Activated T-helper 2 cell treated with anti-CD3 and anti-CD28 coated beads, Interferon-gamma antibody, Interleukin-2, Interleukin-4, amounts not matched to agents 10 μg/mL and 5 μg/mL and 100 μg/mL, durations not matched to agents 14 hours and 24 hours and 36 hours (primary cell): ENCODE measurements at regions of chr13 and their contacts with region 1.

Region 1: GRCh38 chr13:77729502-77730221 is 32.2 kb downstream of the SLAIN1 start:
- DNase-seq: peak; percentile 51
- H3K4me3 Mint-ChIP-seq: peak overlapping the region; percentile 57
- H3K27ac Mint-ChIP-seq: peak overlapping the region; percentile 83
- H3K4me1 Mint-ChIP-seq: peaks cover 40% of the 10 kb centered on the region
- H3K27me3 Mint-ChIP-seq: no peaks in the 10 kb centered on the region

Region 2: DNA sequence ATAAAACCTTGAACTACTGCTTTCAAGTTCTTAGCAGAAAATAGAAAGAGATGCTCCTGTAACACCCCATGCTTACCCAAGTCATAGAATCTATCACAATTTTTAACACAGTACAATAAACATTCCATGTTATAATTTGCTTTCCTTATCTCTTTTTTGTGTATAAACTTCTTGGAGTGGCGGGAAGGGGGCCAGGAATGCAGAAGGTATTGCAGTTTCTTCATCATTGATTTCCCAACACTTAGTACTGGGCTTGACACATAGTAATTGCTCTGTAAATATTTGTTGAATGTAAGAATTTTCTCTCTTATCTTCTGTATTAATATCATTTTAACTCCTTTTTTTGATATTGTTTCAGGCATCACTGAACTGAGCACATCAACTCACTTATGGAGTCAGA is 1379.3 kb before region 1 on chr13:
- intact Hi-C with region 1: no loop called
- DNase-seq: no peak
- H3K4me3 Mint-ChIP-seq: no peak overlapping the region
- H3K27ac Mint-ChIP-seq: no peak overlapping the region
- H3K4me1 Mint-ChIP-seq: no peaks in the 10 kb centered on the region
- H3K27me3 Mint-ChIP-seq: no peaks in the 10 kb centered on the region

Region 3: DNA sequence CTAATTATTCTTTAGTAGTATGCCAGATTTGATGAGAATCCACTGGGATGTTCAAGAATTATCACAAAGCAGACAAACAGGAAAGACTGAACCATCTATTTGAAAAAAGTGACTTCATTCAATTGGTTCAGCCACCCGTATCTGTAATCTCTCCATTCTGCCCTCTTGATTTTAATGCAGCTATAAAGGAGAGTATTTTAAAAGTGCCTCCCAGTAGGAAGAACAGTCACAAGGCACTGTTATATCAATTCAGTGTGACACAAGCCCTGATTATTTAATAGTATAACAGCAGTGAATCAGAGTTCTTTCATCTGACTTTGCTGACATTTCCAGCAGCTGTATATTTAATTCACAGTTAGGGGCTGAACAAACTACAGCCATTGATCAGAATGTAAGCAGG is 109.5 kb before region 1 on chr13:
- intact Hi-C with region 1: no loop called
- DNase-seq: no peak
- H3K4me3 Mint-ChIP-seq: no peak overlapping the region
- H3K27ac Mint-ChIP-seq: no peak overlapping the region
- H3K4me1 Mint-ChIP-seq: no peaks in the 10 kb centered on the region
- H3K27me3 Mint-ChIP-seq: peaks cover 14% of the 10 kb centered on the region

Region 4: GRCh38 chr13:77715233-77715891 is 14.3 kb before region 1 on chr13:
- intact Hi-C with region 1: loop called (anchors 2 kb)
- DNase-seq: no peak
- H3K4me3 Mint-ChIP-seq: no peak overlapping the region
- H3K27ac Mint-ChIP-seq: peak overlapping the region; percentile 30
- H3K4me1 Mint-ChIP-seq: peaks cover 24% of the 10 kb centered on the region
- H3K27me3 Mint-ChIP-seq: no peaks in the 10 kb centered on the region

Region 5: GRCh38 chr13:79541426-79542049 is 1811.9 kb after region 1 on chr13:
- intact Hi-C with region 1: loop called (anchors 10 kb)
- DNase-seq: no peak
- H3K4me3 Mint-ChIP-seq: no peak overlapping the region
- H3K27ac Mint-ChIP-seq: no peak overlapping the region
- H3K4me1 Mint-ChIP-seq: peaks cover 43% of the 10 kb centered on the region
- H3K27me3 Mint-ChIP-seq: no peaks in the 10 kb centered on the region